Activated T-helper 2 cell treated with anti-CD3 and anti-CD28 coated beads, Interferon-gamma antibody, Interleukin-2, Interleukin-4, amounts not matched to agents 10 μg/mL and 5 μg/mL and 100 μg/mL, durations not matched to agents 14 hours and 24 hours and 36 hours (primary cell): ENCODE measurements at regions of chr16 and their contacts with region 1.

Region 1: GRCh38 chr16:1398826-1399601 is 15.5 kb downstream of the UNKL start:
- DNase-seq: no peak
- H3K4me3 Mint-ChIP-seq: no peak overlapping the region
- H3K27ac Mint-ChIP-seq: no peak overlapping the region
- H3K4me1 Mint-ChIP-seq: no peaks in the 10 kb centered on the region
- H3K27me3 Mint-ChIP-seq: no peaks in the 10 kb centered on the region

Region 2: GRCh38 chr16:1357906-1358566 is 41.0 kb before region 1 on chr16:
- intact Hi-C with region 1: loop called (anchors 1 kb)
- DNase-seq: no peak
- H3K4me3 Mint-ChIP-seq: no peak overlapping the region
- H3K27ac Mint-ChIP-seq: no peak overlapping the region
- H3K4me1 Mint-ChIP-seq: peaks cover 7% of the 10 kb centered on the region
- H3K27me3 Mint-ChIP-seq: no peaks in the 10 kb centered on the region

Region 3: DNA sequence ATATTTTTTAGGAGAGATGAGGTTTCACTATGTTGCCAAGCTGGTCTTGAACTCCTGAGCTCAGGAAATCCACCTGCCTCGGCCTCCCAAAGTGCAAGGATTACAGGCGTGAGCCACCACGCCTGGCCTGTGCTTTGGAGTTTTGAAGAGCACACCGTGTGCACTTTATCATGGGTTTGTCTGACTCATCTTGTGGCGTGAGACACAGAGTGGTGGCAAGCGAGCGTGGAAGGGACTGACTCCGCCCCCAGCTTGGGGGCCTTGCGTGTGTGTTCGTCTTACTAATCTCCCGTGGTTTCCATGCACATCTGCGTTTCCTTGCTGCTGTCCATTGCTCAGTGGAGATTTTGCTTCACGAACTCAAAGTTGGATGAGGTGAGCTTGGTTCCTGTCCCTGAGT is 236.1 kb after region 1 on chr16:
- intact Hi-C with region 1: no loop called
- DNase-seq: no peak
- H3K4me3 Mint-ChIP-seq: no peak overlapping the region
- H3K27ac Mint-ChIP-seq: no peak overlapping the region
- H3K4me1 Mint-ChIP-seq: no peaks in the 10 kb centered on the region
- H3K27me3 Mint-ChIP-seq: no peaks in the 10 kb centered on the region